ENCODE measurements at regions of chr19 and their contacts with region 1.

Region 1: DNA sequence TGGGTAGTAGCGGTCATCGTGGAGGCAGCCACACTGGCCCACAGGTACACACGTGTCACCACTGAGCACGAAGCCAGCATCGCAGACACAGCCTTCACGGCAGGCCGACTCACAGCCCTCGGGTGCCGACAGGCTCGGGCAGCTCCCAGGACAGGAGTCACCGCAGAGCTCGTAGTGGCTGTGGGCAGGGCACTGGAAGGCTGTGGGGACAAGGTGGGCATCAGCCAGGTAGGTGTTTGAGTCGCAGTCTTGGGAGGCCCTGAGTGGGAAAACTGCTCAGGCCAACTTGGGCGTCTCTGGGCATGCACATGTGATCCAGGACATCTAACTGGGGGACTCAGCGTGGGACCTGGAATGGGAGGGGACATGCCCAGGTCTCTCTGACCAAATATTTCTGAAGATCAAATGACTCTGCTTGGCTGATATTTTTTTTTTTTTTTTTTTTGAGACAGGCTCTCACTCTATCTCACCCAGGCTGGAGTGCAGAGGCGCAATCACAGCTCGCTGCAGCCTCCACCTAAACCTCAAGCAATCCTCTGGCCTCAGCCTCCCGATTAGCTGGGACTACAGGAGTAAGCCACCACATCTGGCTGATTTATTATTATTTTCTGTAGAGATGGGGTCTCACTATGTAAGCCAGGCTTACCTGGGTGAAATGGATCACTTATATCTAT is 43.8 kb upstream of the FBL start:
- DNase-seq: no peak
- ATAC-seq: no peak
- H3K4me3 ChIP-seq: no peak overlapping the region
- H3K27ac ChIP-seq: no peak overlapping the region
- H3K4me1 ChIP-seq: peaks cover 4% of the 10 kb centered on the region
- CTCF ChIP-seq: no peak
- EP300 ChIP-seq: no peak
- POLR2A ChIP-seq: no peak
- RAD21 ChIP-seq: no peak

Region 2: GRCh38 chr19:39878398-39878797 is 11.6 kb before region 1 on chr19:
- CTCF ChIA-PET with region 1: interaction called, 10 read pairs
- POLR2A ChIA-PET with region 1: no interaction called
- DNase-seq: no peak
- ATAC-seq: peak; percentile 11 to 17; a peak in 4 of 6 replicates
- H3K4me3 ChIP-seq: no peak overlapping the region
- H3K27ac ChIP-seq: no peak overlapping the region
- H3K4me1 ChIP-seq: no peaks in the 10 kb centered on the region
- CTCF ChIP-seq: no peak
- EP300 ChIP-seq: no peak
- POLR2A ChIP-seq: no peak
- RAD21 ChIP-seq: no peak

Measured in A549 (cell line).